ENCODE measurements at regions of chr9 and their contacts with region 1.

Region 1: DNA sequence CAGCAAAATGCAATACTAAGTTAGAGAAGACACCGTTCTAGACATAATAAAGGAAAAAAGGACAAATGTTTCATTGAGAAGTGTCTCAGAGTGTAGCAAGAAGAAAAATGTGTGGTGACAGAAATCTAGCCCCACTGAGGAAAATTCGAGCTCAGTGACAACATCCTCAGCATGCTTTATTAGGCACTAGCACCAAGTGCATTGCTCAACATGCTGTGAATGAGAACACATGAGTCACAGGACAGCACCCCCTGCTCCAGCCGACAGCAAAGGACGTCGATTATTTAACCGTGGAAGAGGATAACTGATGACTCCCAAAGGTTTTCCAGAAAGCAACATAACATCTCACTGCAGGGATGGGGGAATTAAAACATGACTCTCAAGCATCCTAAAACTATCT is 182.7 kb downstream of the GNAQ start:
- DNase-seq: peak in 3 of 5 donors; percentile 37 to 65 (median 59)
- ATAC-seq: peak; percentile 70 to 94 (median 82)
- H3K4me3 ChIP-seq: no peak overlapping the region
- H3K27ac ChIP-seq: peak overlapping the region in 11 of 12 donors; percentile 25 to 80 (median 58)
- H3K4me1 ChIP-seq: peaks cover 0 to 80% (median 42%) of the 10 kb centered on the region in 12 donors
- H3K27me3 ChIP-seq: no peaks in the 10 kb centered on the region
- CTCF ChIP-seq: no peak
- POLR2A ChIP-seq: no peak

Region 2: GRCh38 chr9:77215874-77216273 is 633.0 kb before region 1 on chr9:
- intact Hi-C with region 1: no loop called
- DNase-seq: no peak
- ATAC-seq: no peak
- H3K4me3 ChIP-seq: no peak overlapping the region
- H3K27ac ChIP-seq: no peak overlapping the region
- H3K4me1 ChIP-seq: no peaks in the 10 kb centered on the region
- H3K27me3 ChIP-seq: no peaks in the 10 kb centered on the region
- CTCF ChIP-seq: peak in 5 of 12 donors; percentile 15 to 36 (median 24)
- POLR2A ChIP-seq: no peak

Region 3: DNA sequence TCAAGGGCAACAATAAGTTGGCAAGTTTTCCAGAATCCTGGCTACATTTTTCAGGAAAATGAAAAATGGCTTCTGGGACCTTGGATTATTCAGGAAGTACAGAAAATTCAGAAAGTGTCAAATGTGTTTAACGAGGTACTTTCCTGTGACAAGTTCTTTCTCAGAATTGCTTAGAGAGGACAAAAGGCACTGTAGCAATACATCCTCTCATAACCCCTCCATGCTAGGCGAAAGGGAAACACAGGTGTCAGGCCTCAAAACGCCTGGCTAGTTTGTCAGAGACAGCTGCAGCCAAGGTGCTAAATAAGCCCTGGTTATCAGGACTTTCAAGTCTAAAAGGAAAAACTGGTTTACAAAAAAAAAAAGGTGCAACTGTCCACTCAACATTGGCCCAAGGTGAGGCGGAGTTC is 67.5 kb after region 1 on chr9:
- intact Hi-C with region 1: loop called in 1 of 10 experiments (anchors 10 kb)
- DNase-seq: no peak
- ATAC-seq: no peak
- H3K4me3 ChIP-seq: no peak overlapping the region
- H3K27ac ChIP-seq: peak overlapping the region in 3 of 12 donors; percentile 5 to 46 (median 12)
- H3K4me1 ChIP-seq: peaks cover 0 to 43% (median 1%) of the 10 kb centered on the region in 12 donors
- H3K27me3 ChIP-seq: no peaks in the 10 kb centered on the region
- CTCF ChIP-seq: no peak
- POLR2A ChIP-seq: no peak

Region 4: DNA sequence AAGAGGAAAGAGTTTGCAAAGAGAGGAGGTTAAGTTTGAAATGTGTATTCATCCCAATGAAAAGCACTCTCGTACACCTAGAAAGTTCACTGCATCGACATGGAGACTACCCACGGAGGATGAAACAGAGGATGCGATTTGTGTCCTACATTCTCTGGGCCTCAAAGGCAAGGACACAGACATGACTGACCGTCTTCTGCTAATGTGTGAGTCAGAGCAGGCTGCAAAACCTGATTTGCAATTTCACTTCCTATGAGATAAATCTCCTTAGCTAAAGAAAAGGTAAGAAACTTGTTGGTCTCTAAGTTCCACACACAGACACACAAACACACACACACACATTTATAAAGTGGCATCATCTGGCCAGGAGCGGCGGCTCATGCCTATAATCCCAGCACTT is 84.1 kb after region 1 on chr9:
- intact Hi-C with region 1: loop called in 1 of 10 experiments (anchors 5 kb)
- DNase-seq: no peak
- ATAC-seq: no peak
- H3K4me3 ChIP-seq: no peak overlapping the region
- H3K27ac ChIP-seq: no peak overlapping the region
- H3K4me1 ChIP-seq: peaks cover 0 to 41% (median 0%) of the 10 kb centered on the region in 12 donors
- H3K27me3 ChIP-seq: no peaks in the 10 kb centered on the region
- CTCF ChIP-seq: no peak
- POLR2A ChIP-seq: no peak